GM12878 (cell line): ENCODE measurements at regions of chr14 and their contacts with region 1.

Region 1: DNA sequence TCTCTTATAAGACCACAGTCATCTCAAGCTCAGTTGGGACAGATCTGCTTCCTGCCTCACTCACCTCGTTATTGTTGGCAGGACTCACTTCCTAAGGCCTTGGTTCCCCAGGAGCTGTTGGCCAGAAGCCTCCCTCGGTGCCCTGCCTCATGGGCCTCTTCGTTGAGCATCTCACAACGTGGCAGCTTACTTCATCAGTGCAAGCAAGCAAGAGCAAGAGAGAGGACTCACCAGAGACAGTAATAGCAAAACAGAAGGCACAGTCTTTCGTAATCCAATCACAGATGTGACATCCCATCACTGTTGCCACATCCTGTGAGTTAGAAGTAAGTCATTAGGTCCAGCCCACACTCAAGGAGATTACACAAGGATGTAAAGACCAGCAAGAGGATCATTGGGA is 5.1 kb upstream of the NUMB start:
- DNase-seq: no peak
- ATAC-seq: peak; percentile 2; the same call in 1 of the 3 replicates
- H3K4me3 ChIP-seq: no peak overlapping the region
- H3K27ac ChIP-seq: no peak overlapping the region
- H3K4me1 ChIP-seq: peaks cover 30% of the 10 kb centered on the region
- H3K27me3 ChIP-seq: no peaks in the 10 kb centered on the region
- CTCF ChIP-seq: no peak
- EP300 ChIP-seq: no peak
- POLR2A ChIP-seq: no peak
- RAD21 ChIP-seq: no peak

Region 2: GRCh38 chr14:73173092-73173735 is 290.2 kb before region 1 on chr14:
- CTCF ChIA-PET with region 1: interaction called, 106 read pairs
- POLR2A ChIA-PET with region 1: no interaction called
- RAD21 ChIA-PET with region 1: interaction called, 4 read pairs
- SMC1A ChIA-PET with region 1: interaction called, 37 read pairs
- in situ Hi-C with region 1: no loop called
- intact Hi-C with region 1: no loop called
- DNase-seq: no peak
- ATAC-seq: peak; percentile 60
- H3K4me3 ChIP-seq: no peak overlapping the region
- H3K27ac ChIP-seq: no peak overlapping the region
- H3K4me1 ChIP-seq: no peaks in the 10 kb centered on the region
- H3K27me3 ChIP-seq: no peaks in the 10 kb centered on the region
- CTCF ChIP-seq: peak; percentile 19 to 62 (median 36); a peak in 4 of 6 replicates
- EP300 ChIP-seq: no peak
- POLR2A ChIP-seq: no peak
- RAD21 ChIP-seq: peak; percentile 68

Region 3: DNA sequence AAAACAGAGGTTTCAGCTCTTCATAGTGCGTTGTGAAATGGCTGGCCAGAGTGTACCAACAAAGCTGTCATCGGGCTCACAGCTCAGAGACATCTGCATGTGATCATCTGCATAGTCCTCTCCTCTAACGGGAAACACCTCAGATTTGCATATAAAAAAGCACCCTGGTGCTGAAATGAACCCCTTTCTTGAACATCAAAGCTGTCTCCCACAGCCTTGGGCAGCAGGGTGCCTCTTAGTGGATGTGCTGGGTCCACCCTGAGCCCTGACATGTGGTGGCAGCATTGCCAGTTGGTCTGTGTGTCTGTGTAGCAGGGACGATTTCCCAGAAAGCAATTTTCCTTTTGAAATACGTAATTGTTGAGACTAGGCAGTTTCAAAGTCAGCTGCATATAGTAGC is 240.4 kb before region 1 on chr14:
- CTCF ChIA-PET with region 1: interaction called, 42 read pairs
- POLR2A ChIA-PET with region 1: interaction called, 5 read pairs
- RAD21 ChIA-PET with region 1: interaction called, 10 read pairs
- SMC1A ChIA-PET with region 1: interaction called, 8 read pairs
- in situ Hi-C with region 1: no loop called
- intact Hi-C with region 1: no loop called
- DNase-seq: peak; percentile 63
- ATAC-seq: peak; percentile 96
- H3K4me3 ChIP-seq: no peak overlapping the region
- H3K27ac ChIP-seq: peak overlapping the region; percentile 20; the same call in 1 of the 2 replicates
- H3K4me1 ChIP-seq: peaks cover 9% of the 10 kb centered on the region; the same call in 1 of the 2 replicates
- H3K27me3 ChIP-seq: no peaks in the 10 kb centered on the region
- CTCF ChIP-seq: peak in 1 of 3 experiments; percentile 50; a peak in 2 of 6 replicates
- EP300 ChIP-seq: no peak
- POLR2A ChIP-seq: peak; percentile 49; the same call in 1 of the 2 replicates
- RAD21 ChIP-seq: peak; percentile 32; the same call in 1 of the 2 replicates

Region 4: DNA sequence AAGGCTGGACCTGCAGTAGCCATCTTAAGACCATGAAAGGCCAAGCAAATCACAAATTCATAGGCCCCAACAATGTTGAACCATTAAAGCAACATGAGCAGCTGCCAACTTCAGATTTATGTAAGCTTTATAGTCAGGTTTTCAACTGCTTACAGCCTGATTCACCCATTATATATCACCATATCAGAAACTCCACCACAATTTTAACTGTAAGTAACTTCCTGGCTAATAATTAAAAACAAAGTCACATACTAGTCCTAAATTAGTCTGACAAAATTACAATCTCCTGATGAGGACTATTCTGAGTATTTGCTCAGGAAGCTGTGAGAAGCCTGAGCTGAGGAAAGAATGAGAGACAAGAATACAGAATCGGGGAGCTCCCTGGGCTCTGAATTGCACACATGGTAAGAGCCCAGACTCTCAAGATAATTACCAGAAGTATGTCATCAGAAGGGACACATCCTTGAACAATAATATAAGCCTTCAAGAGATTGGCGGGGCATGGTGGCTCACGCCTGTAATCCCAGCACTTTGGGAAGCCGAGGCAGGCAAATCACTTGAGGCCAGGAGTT is 60.1 kb before region 1 on chr14:
- CTCF ChIA-PET with region 1: interaction called, 14 read pairs
- POLR2A ChIA-PET with region 1: interaction called, 18 read pairs
- RAD21 ChIA-PET with region 1: interaction called, 64 read pairs
- SMC1A ChIA-PET with region 1: interaction called, 109 read pairs
- in situ Hi-C with region 1: no loop called
- intact Hi-C with region 1: loop called (anchors 5 kb)
- DNase-seq: no peak
- ATAC-seq: peak; percentile 23
- H3K4me3 ChIP-seq: no peak overlapping the region
- H3K27ac ChIP-seq: peak overlapping the region; percentile 45
- H3K4me1 ChIP-seq: peaks cover 28% of the 10 kb centered on the region
- H3K27me3 ChIP-seq: no peaks in the 10 kb centered on the region
- CTCF ChIP-seq: no peak
- EP300 ChIP-seq: no peak
- POLR2A ChIP-seq: no peak
- RAD21 ChIP-seq: no peak

Region 5: GRCh38 chr14:73418227-73418626 is 45.2 kb before region 1 on chr14:
- CTCF ChIA-PET with region 1: interaction called, 4 read pairs
- POLR2A ChIA-PET with region 1: interaction called, 13 read pairs
- RAD21 ChIA-PET with region 1: interaction called, 40 read pairs
- SMC1A ChIA-PET with region 1: interaction called, 18 read pairs
- in situ Hi-C with region 1: no loop called
- intact Hi-C with region 1: loop called (anchors 5 kb)
- DNase-seq: no peak
- ATAC-seq: no peak
- H3K4me3 ChIP-seq: no peak overlapping the region
- H3K27ac ChIP-seq: no peak overlapping the region
- H3K4me1 ChIP-seq: peaks cover 19% of the 10 kb centered on the region
- H3K27me3 ChIP-seq: no peaks in the 10 kb centered on the region
- CTCF ChIP-seq: no peak
- EP300 ChIP-seq: no peak
- POLR2A ChIP-seq: no peak
- RAD21 ChIP-seq: no peak

Region 6: DNA sequence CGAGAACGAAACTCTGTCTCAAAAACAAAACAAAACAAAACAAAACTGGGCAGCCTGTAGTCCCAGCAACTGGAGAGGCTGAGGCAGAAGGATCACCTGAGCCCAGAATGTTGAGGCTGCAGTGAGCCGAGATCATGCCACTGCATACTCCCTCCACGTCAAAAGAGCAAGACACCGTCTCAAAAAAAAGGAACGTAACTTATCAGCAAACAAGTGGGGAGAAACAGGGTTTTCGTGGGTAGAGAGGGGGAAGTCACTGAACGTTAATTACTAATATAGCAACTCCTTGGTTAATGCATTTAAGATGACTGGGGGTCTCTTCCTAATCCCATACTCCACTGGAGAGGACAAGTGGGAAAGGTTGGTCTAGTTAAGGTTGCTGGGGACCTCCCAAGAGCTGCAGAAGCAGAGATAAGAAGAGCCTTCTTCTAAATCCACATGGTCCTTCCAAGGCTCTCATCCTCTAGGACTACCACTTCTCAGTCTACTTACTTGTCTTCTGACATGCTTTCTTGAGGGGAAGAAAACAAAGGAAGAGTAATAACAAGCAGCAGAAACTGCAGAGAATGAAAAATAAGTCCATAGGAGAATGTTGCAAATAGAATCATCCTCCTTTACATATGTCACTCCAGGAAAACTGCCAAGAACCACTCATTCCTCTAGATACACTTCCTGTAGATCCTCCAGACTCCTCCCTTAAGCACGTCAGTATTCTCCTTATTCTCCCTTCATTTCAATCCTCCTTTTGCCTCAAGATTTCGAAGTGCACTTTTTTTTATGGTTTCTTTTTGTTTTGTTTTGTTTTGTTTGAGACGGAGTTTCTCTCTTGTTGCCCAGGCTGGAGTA is 10.8 kb before region 1 on chr14:
- CTCF ChIA-PET with region 1: interaction called, 6 read pairs
- POLR2A ChIA-PET with region 1: interaction called, 42 read pairs
- RAD21 ChIA-PET with region 1: interaction called, 20 read pairs
- SMC1A ChIA-PET with region 1: interaction called, 78 read pairs
- in situ Hi-C with region 1: no loop called
- intact Hi-C with region 1: no loop called
- DNase-seq: no peak
- ATAC-seq: peak; percentile 69
- H3K4me3 ChIP-seq: no peak overlapping the region; the same call in 1 of the 2 replicates
- H3K27ac ChIP-seq: peak overlapping the region; percentile 32; the same call in 1 of the 2 replicates
- H3K4me1 ChIP-seq: peaks cover 11% of the 10 kb centered on the region
- H3K27me3 ChIP-seq: no peaks in the 10 kb centered on the region
- CTCF ChIP-seq: no peak
- EP300 ChIP-seq: no peak
- POLR2A ChIP-seq: no peak
- RAD21 ChIP-seq: no peak

Region 7: GRCh38 chr14:73477618-73478266 is 14.3 kb after region 1 on chr14:
- CTCF ChIA-PET with region 1: interaction called, 21 read pairs
- POLR2A ChIA-PET with region 1: interaction called, 42 read pairs
- RAD21 ChIA-PET with region 1: interaction called, 41 read pairs
- SMC1A ChIA-PET with region 1: interaction called, 23 read pairs
- in situ Hi-C with region 1: no loop called
- intact Hi-C with region 1: no loop called
- DNase-seq: peak; percentile 90
- ATAC-seq: peak; percentile 88
- H3K4me3 ChIP-seq: no peak overlapping the region
- H3K27ac ChIP-seq: peak overlapping the region; percentile 68
- H3K4me1 ChIP-seq: peaks cover 17% of the 10 kb centered on the region
- H3K27me3 ChIP-seq: no peaks in the 10 kb centered on the region
- CTCF ChIP-seq: no peak
- EP300 ChIP-seq: peak; percentile 73 to 89; a peak in 2 of 4 replicates
- POLR2A ChIP-seq: no peak
- RAD21 ChIP-seq: peak; percentile 24; the same call in 1 of the 2 replicates